BJ (cell line): ENCODE measurements at regions of chr20 and their contacts with region 1.

Region 1: DNA sequence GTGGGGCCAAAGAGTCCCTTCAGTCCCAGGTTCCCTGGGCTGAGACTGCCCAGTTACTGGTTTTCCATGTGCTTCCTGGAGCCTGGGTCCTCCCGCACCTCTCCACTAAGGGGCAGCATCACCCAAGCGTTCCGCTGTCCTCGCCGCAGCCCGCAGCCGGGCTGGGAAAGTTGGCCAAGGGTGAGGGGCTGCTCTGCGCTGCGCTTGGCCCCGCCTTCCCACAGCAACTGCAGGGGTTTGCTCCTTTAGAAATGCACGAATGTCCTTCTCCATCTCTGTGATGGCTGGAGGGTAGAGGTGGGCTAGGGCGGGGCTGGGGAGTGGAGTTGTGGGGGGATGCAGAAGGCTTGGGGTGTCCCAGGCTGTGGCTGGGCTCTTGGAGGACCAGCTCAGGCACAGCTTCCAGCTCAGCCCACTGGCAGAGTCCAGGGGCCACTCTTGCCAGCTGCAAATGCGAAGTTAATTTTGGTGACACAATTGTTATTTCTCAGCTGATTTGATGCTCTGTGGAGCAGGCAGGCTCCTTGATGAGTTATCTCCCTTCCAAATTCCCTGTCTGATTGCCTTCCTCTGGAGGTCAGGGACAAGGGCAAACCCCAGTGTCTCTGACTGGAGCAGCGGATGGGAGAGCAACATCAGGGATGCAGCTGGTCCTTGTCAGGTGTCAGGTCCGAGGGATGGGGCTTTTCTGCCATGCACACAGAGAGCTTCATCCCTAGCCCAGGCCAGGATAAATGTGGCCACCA is 63.2 kb downstream of the NOL4L start:
- DNase-seq: no peak
- H3K4me3 ChIP-seq: no peak overlapping the region
- H3K27me3 ChIP-seq: no peaks in the 10 kb centered on the region
- CTCF ChIP-seq: peak; percentile 92

Region 2: DNA sequence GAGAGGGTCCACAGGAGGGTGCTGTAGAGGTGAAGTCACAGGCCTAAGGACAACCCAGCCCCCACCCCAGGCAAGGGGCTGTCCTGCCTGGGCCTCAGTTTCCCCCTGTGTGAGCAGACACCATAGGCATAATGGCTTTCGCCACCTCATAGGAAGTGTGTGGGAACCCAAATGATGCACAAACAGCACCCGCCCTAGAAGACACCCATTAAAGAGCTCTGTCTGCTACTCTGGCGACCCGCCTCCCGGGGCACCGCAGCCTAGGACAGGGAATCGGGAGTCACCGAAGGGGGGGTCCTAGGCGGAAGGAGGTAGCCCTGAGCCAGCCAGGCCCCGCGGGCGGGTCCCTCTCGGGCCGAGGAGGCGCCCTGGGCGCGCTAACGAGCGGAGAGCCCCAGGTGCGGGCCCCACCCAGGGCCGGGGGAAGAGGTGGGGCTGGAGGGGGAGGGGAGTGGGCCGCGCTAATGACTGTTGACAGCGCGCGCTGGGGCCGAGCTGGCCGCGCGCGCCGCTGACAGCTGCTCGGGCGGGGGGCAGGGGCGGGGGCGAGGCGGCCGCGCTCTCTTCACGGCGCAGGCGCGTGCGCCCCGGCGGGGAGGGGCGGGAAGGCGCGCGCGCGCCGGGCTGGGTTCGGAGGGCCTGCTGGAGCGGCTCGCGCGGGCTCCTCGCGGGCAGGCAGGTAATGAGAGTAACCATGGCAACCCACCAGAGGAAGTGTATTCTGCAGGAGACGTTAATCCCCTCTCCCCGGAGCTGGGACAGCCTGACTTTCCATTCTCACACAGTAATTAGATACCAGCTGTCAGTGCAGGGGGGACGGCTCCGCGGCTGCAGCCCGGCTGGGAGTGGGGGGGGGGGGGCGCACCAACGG is 14.2 kb after region 1 on chr20:
- CTCF ChIA-PET with region 1: interaction called, 12 read pairs
- POLR2A ChIA-PET with region 1: no interaction called
- DNase-seq: no peak
- H3K4me3 ChIP-seq: peak overlapping the region; percentile 23
- H3K27me3 ChIP-seq: peaks cover 7% of the 10 kb centered on the region
- CTCF ChIP-seq: no peak

Region 3: GRCh38 chr20:32646486-32646885 is 124.5 kb after region 1 on chr20:
- CTCF ChIA-PET with region 1: interaction called, 262 read pairs
- POLR2A ChIA-PET with region 1: no interaction called
- DNase-seq: no peak
- H3K4me3 ChIP-seq: no peak overlapping the region
- H3K27me3 ChIP-seq: peaks cover 2% of the 10 kb centered on the region
- CTCF ChIP-seq: no peak

Region 4: GRCh38 chr20:32664678-32665159 is 142.8 kb after region 1 on chr20:
- CTCF ChIA-PET with region 1: interaction called, 11 read pairs
- POLR2A ChIA-PET with region 1: no interaction called
- DNase-seq: no peak
- H3K4me3 ChIP-seq: no peak overlapping the region
- H3K27me3 ChIP-seq: no peaks in the 10 kb centered on the region
- CTCF ChIP-seq: no peak